ENCODE measurements at regions of chr16 and their contacts with region 1.

Region 1: GRCh38 chr16:22694887-22695382 is 119.0 kb upstream of the HS3ST2 start:
- DNase-seq: no peak

Region 2: DNA sequence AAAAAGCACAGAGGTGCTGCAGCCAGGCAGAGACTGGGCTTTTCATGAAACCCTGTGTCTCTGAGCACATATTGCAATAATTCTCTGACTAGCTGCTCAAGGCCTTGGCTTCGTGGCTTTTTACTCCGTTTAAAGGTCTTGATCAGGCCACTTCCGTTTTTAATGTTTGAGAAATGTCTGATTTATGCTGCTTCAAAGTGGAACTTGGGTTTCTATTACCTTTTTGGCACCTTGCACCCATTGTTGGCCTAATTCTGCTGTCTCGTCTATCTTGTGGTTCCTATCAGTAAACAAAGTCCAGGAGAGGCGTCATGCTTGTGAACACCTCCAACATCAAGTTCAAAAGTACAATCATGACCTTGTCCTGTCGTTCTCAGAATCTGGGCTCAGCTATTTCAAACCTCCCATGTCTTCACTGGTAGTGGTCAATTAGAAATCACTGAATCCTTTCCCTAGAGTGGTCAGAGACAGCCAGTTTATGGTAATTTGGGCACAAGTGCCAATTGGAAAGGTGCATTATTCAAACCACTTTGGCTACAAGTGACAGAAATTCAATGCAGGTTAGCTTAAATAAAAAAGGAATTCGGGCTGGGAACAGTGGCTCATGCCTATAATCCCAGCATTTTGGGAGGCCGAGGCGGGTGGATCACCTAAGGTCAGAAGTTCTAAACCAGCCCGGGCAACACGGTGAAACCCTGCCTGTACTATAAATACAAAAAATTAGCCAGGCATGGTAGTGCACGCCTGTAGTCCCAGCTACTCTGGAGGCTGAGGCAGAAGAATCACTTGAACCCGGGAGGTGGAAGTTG is 1128.9 kb before region 1 on chr16:
- intact Hi-C with region 1: loop called in 1 of 2 experiments (anchors 5 kb)
- DNase-seq: peak; percentile 57

Region 3: GRCh38 chr16:21580807-21581206 is 1114.1 kb before region 1 on chr16:
- intact Hi-C with region 1: loop called in 1 of 2 experiments (anchors 2 kb)
- DNase-seq: no peak

Region 4: GRCh38 chr16:22763437-22764080 is 68.6 kb after region 1 on chr16:
- intact Hi-C with region 1: no loop called
- DNase-seq: no peak

Measured in posterior vena cava (tissue), 2 donors.